GM12878 (cell line): ENCODE measurements at regions of chr3 and their contacts with region 1.

Region 1: DNA sequence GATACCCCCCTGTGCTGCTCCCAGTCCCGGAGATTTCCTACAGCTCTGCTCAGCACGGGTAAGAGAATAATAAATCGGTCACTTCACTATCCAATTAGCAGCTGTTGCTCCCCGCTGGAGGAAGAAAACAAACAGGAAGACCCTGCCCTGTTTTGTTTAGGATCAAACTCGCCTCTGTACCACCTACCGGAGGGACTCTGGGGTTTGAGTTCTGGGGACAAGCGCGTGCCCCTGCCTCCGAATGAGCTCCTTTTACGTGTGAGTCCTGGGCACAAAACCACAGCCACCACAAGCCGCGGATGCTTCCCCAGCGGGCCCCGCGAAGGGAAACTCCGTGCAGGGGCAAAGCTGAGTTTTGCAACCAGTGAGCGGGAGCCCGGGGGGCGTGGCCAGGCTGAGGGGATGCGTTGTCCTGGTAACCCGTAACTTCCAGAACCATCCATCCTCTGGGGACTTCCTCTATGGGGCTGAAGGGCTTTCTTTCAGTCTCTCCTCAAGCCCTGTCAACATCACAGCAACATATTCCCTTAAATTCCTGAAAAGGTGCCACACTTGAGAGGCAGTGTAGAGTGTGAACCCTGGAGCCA is 315.7 kb upstream of the PROK2 start:
- DNase-seq: peak; percentile 77
- ATAC-seq: peak; percentile 74
- H3K4me3 ChIP-seq: peak overlapping the region; percentile 69; the same call in 1 of the 2 replicates
- H3K27ac ChIP-seq: peak overlapping the region; percentile 68
- H3K4me1 ChIP-seq: peaks cover 49% of the 10 kb centered on the region
- H3K27me3 ChIP-seq: no peaks in the 10 kb centered on the region
- CTCF ChIP-seq: no peak
- EP300 ChIP-seq: peak; percentile 49 to 76
- POLR2A ChIP-seq: peak; percentile 59
- RAD21 ChIP-seq: 0 out of 2 replicates have a peak, but pooled peaks have one; percentile 5

Region 2: DNA sequence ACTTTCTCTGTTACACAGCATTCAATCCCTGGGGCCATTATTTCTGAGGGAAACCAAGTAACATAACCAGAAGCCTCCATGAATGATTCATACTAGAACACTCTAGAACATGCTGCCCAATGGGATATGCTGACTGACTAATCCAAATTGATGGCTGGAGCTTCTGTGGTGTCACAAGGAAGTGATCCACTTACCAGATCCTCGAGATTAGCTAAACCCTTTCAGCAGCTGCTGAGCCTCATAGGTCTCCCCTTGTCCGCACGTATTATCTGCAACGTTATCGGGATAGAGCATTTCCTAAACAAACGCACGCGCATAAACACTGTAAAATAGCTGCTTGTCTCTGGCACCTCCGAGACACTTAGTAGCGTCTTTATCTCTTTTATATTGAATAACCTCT is 254.5 kb before region 1 on chr3:
- CTCF ChIA-PET with region 1: no interaction called
- POLR2A ChIA-PET with region 1: no interaction called
- RAD21 ChIA-PET with region 1: no interaction called
- SMC1A ChIA-PET with region 1: no interaction called
- in situ Hi-C with region 1: no loop called
- intact Hi-C with region 1: no loop called
- DNase-seq: no peak
- ATAC-seq: no peak
- H3K4me3 ChIP-seq: no peak overlapping the region
- H3K27ac ChIP-seq: no peak overlapping the region
- H3K4me1 ChIP-seq: no peaks in the 10 kb centered on the region
- H3K27me3 ChIP-seq: peaks cover 0 to 1% of the 10 kb centered on the region in 2 experiments; a peak in 2 of 4 replicates
- CTCF ChIP-seq: no peak
- EP300 ChIP-seq: no peak
- POLR2A ChIP-seq: no peak
- RAD21 ChIP-seq: no peak

Region 3: DNA sequence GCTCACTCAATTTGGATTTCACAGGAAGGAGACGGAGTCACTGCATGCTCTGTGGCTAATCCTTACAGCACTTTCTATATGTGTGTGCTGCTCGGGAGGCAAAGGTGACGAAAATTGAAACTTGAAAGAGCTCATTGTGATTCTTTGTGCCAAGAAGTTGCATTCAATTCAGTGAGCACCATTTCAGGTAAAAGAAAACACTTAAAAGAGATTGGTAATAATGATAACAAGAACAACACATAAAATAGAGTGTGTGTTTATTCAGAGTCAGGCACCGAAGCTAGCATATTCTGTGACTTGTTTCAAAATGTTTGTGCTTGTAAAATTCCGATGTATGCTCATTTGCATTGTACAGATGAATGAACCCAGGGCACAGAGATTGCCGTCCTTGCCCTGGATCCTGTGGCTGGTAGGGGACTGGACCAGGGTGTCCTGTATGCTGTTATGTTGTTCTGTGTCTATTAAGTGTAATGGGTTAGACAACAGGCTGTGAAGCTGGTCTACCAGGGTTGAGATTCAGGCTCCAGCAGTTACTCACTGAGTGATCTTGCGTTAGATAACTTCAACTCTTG is 122.5 kb before region 1 on chr3:
- CTCF ChIA-PET with region 1: interaction called, 5 read pairs
- POLR2A ChIA-PET with region 1: interaction called, 21 read pairs
- RAD21 ChIA-PET with region 1: interaction called, 37 read pairs
- SMC1A ChIA-PET with region 1: interaction called, 34 read pairs
- in situ Hi-C with region 1: no loop called
- intact Hi-C with region 1: loop called (anchors 2 kb)
- DNase-seq: peak; percentile 81
- ATAC-seq: peak; percentile 90
- H3K4me3 ChIP-seq: peak overlapping the region; percentile 40; the same call in 1 of the 2 replicates
- H3K27ac ChIP-seq: peak overlapping the region; percentile 78
- H3K4me1 ChIP-seq: peaks cover 39% of the 10 kb centered on the region
- H3K27me3 ChIP-seq: no peaks in the 10 kb centered on the region
- CTCF ChIP-seq: no peak
- EP300 ChIP-seq: peak; percentile 52 to 59; a peak in 2 of 4 replicates
- POLR2A ChIP-seq: no peak
- RAD21 ChIP-seq: 0 out of 2 replicates have a peak, but pooled peaks have one; percentile 12

Region 4: DNA sequence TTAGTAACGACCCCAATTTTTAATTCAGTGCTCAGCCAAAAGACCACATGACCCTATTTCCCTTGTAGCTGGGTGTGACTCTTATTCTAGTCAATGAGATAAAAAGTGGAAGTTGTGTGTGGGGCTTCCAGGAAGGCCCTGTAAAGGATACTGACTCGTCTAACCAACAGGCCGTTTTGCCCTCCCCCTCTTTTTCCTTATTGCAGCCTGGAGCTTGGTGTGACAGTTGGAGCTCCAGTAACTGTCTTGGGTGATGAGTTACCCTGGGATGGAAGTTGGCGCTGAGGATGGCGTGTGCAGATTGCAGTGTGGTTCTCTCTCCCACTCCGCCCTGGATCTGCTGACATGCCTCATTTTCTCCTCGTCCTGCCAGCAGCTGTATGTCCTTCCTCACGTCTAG is 106.5 kb before region 1 on chr3:
- CTCF ChIA-PET with region 1: no interaction called
- POLR2A ChIA-PET with region 1: no interaction called
- RAD21 ChIA-PET with region 1: no interaction called
- SMC1A ChIA-PET with region 1: no interaction called
- in situ Hi-C with region 1: no loop called
- intact Hi-C with region 1: no loop called
- DNase-seq: no peak
- ATAC-seq: no peak
- H3K4me3 ChIP-seq: no peak overlapping the region
- H3K27ac ChIP-seq: no peak overlapping the region
- H3K4me1 ChIP-seq: peaks cover 1% of the 10 kb centered on the region
- H3K27me3 ChIP-seq: no peaks in the 10 kb centered on the region
- CTCF ChIP-seq: no peak
- EP300 ChIP-seq: no peak
- POLR2A ChIP-seq: no peak
- RAD21 ChIP-seq: no peak

Region 5: DNA sequence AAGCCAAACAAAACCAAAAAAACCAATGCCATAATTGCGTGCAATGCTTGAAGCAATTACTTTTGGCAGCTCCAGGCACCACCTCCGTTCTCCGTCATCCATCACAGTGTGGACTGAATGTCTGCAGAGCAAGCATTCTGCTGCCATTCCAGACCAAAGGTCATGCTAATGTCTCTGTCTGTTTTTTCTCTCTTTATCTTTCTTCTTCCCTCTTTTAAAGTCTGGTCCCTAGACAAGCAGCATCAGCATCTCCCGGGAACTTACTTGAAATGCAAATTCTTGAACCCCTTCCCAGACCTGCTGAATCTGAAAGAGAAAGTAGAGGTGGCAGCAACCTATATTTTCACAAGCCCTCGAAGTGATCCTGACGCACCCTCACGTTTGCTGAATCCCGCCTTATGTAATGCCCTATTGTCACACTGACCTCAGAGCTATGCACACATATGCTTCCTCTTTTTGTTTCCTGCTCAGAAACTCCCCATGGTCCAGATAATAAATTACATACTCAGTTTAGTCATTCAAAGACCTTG is 18.4 kb before region 1 on chr3:
- CTCF ChIA-PET with region 1: interaction called, 12 read pairs
- POLR2A ChIA-PET with region 1: interaction called, 55 read pairs
- RAD21 ChIA-PET with region 1: interaction called, 44 read pairs
- SMC1A ChIA-PET with region 1: interaction called, 97 read pairs
- in situ Hi-C with region 1: no loop called
- intact Hi-C with region 1: loop called (anchors 1 kb)
- DNase-seq: peak; percentile 80
- ATAC-seq: peak; percentile 79
- H3K4me3 ChIP-seq: peak overlapping the region; percentile 33; the same call in 1 of the 2 replicates
- H3K27ac ChIP-seq: peak overlapping the region; percentile 78
- H3K4me1 ChIP-seq: peaks cover 71% of the 10 kb centered on the region
- H3K27me3 ChIP-seq: no peaks in the 10 kb centered on the region
- CTCF ChIP-seq: no peak
- EP300 ChIP-seq: peak; percentile 46 to 69; a peak in 2 of 4 replicates
- POLR2A ChIP-seq: no peak
- RAD21 ChIP-seq: no peak

Region 6: GRCh38 chr3:72134989-72135451 is 34.3 kb after region 1 on chr3:
- CTCF ChIA-PET with region 1: interaction called, 3 read pairs
- POLR2A ChIA-PET with region 1: no interaction called
- RAD21 ChIA-PET with region 1: interaction called, 26 read pairs
- SMC1A ChIA-PET with region 1: interaction called, 7 read pairs
- in situ Hi-C with region 1: no loop called
- intact Hi-C with region 1: no loop called
- DNase-seq: no peak
- ATAC-seq: peak; percentile 84
- H3K4me3 ChIP-seq: no peak overlapping the region
- H3K27ac ChIP-seq: peak overlapping the region; percentile 4
- H3K4me1 ChIP-seq: peaks cover 32% of the 10 kb centered on the region
- H3K27me3 ChIP-seq: no peaks in the 10 kb centered on the region
- CTCF ChIP-seq: no peak
- EP300 ChIP-seq: 0 out of 4 replicates have a peak, but pooled peaks of 1 of the 2 experiments have one; percentile 13
- POLR2A ChIP-seq: no peak
- RAD21 ChIP-seq: no peak

Region 7: DNA sequence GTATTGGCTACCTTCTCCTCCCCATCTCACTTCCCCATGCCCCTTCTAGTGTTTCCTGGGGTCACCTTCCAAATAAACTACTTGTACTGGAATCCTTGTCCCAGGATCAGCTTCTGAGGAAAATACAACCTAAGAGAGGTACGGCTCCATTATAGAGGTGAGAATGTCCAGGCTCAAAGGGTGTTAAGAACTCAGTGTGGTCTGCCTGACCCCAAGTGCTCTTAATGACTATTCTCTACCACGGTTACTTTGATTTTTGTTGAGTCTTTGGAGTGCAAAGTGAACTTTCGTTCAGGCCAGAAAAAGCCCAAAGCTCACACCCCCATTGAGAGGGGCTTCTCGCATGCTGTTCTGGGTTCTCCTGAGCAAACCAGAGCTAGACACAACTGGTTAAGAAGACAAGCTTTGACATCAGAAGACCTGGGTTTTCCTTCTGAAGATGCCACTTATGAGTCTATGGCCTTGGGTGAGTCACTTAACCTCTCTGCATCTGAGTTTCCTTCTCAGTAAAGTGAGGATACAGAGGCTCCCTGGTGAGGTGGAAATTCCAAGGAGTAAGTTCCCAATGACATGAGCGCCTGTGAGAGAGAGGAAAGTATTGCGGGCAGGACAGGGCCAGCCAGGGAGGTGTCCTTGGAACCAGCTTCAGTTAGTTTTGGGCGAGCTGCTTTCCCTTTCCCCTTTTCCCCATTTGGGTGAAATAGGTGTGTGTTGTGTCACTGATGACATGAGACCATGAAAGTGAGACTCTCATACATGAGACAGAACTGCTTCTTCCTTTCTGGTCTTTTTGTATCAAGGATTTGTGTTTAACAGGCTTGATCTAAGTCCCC is 159.3 kb after region 1 on chr3:
- CTCF ChIA-PET with region 1: interaction called, 3 read pairs
- POLR2A ChIA-PET with region 1: no interaction called
- RAD21 ChIA-PET with region 1: no interaction called
- SMC1A ChIA-PET with region 1: no interaction called
- in situ Hi-C with region 1: no loop called
- intact Hi-C with region 1: loop called (anchors 5 kb)
- DNase-seq: no peak
- ATAC-seq: no peak; the same call in 2 of the 3 replicates
- H3K4me3 ChIP-seq: no peak overlapping the region
- H3K27ac ChIP-seq: no peak overlapping the region
- H3K4me1 ChIP-seq: peaks cover 22% of the 10 kb centered on the region
- H3K27me3 ChIP-seq: no peaks in the 10 kb centered on the region
- CTCF ChIP-seq: no peak
- EP300 ChIP-seq: no peak
- POLR2A ChIP-seq: no peak
- RAD21 ChIP-seq: no peak

Region 8: DNA sequence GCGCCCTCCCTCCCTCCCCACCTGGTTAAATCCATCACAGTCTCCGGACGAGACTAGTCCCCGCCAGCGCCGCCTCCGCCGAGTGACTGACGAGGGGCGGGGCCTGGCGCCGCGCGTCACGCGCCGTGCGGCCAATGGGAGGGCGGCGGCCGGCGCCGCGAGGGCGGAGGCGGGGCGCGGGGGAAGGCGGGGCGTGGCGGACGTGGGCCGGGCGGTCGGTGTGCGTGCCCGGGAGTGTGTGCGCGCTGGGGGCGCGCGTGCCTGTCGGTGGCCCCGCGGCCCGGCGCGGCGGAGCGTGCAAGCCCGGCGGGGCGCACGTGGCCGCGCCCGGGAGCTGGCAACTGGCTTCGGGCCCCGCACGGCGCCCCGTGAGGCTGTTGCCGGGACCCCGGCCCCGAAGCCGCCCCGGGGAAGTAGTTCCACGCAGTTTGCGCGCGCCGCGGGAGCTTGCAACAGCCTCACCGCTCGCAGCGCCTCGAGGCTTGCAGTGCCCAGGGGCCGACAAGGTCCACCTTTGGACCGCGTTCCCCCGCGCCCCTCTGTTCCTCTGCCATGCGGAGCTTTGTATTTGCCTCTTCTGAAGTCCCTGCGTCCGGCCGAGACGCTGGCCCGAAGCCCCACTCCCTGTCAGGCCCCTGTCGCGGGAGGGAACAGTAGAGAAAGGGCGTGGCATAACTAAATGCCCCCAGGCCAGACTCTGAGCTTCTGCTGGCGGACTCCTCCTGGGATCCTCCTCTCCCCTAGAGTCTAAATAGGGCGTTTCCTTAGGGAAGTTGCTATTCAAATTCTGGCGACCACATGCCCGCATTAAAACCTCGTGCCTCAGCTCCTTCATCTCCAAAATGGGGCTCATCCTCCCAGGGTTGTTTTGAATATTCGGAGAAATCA is 346.6 kb after region 1 on chr3:
- CTCF ChIA-PET with region 1: no interaction called
- POLR2A ChIA-PET with region 1: no interaction called
- RAD21 ChIA-PET with region 1: interaction called, 3 read pairs
- SMC1A ChIA-PET with region 1: no interaction called
- in situ Hi-C with region 1: no loop called
- intact Hi-C with region 1: loop called (anchors 5 kb)
- DNase-seq: no peak
- ATAC-seq: peak; percentile 81
- H3K4me3 ChIP-seq: peak overlapping the region; percentile 37; the same call in 1 of the 2 replicates
- H3K27ac ChIP-seq: no peak overlapping the region
- H3K4me1 ChIP-seq: peaks cover 6% of the 10 kb centered on the region; the same call in 1 of the 2 replicates
- H3K27me3 ChIP-seq: no peaks in the 10 kb centered on the region; a peak in 1 of 4 replicates
- CTCF ChIP-seq: no peak; a peak in 1 of 6 replicates
- EP300 ChIP-seq: no peak
- POLR2A ChIP-seq: no peak
- RAD21 ChIP-seq: no peak